ENCODE measurements at regions of chr12 and their contacts with region 1.

Region 1: GRCh38 chr12:114152890-114153289 is 186.8 kb upstream of the RBM19 start:
- DNase-seq: peak; percentile 81
- H3K4me3 Mint-ChIP-seq: no peak overlapping the region
- H3K27ac Mint-ChIP-seq: peak overlapping the region; percentile 59
- H3K4me1 Mint-ChIP-seq: peaks cover 13% of the 10 kb centered on the region
- H3K27me3 Mint-ChIP-seq: no peaks in the 10 kb centered on the region
- CTCF ChIP-seq: no peak

Region 2: GRCh38 chr12:114166362-114166761 is 13.5 kb after region 1 on chr12:
- CTCF ChIA-PET with region 1: interaction called, 16 read pairs
- POLR2A ChIA-PET with region 1: interaction called, 14 read pairs
- intact Hi-C with region 1: no loop called
- DNase-seq: peak; percentile 60
- H3K4me3 Mint-ChIP-seq: no peak overlapping the region
- H3K27ac Mint-ChIP-seq: no peak overlapping the region
- H3K4me1 Mint-ChIP-seq: peaks cover 21% of the 10 kb centered on the region
- H3K27me3 Mint-ChIP-seq: no peaks in the 10 kb centered on the region
- CTCF ChIP-seq: peak; percentile 28

Region 3: GRCh38 chr12:114580306-114580705 is 427.4 kb after region 1 on chr12:
- CTCF ChIA-PET with region 1: no interaction called
- POLR2A ChIA-PET with region 1: no interaction called
- intact Hi-C with region 1: no loop called
- DNase-seq: no peak
- H3K4me3 Mint-ChIP-seq: no peak overlapping the region
- H3K27ac Mint-ChIP-seq: no peak overlapping the region
- H3K4me1 Mint-ChIP-seq: no peaks in the 10 kb centered on the region
- H3K27me3 Mint-ChIP-seq: peaks cover 12% of the 10 kb centered on the region
- CTCF ChIP-seq: no peak